Endothelial cell of umbilical vein (primary cell): ENCODE measurements at regions of chr3 and their contacts with region 1.

Region 1: DNA sequence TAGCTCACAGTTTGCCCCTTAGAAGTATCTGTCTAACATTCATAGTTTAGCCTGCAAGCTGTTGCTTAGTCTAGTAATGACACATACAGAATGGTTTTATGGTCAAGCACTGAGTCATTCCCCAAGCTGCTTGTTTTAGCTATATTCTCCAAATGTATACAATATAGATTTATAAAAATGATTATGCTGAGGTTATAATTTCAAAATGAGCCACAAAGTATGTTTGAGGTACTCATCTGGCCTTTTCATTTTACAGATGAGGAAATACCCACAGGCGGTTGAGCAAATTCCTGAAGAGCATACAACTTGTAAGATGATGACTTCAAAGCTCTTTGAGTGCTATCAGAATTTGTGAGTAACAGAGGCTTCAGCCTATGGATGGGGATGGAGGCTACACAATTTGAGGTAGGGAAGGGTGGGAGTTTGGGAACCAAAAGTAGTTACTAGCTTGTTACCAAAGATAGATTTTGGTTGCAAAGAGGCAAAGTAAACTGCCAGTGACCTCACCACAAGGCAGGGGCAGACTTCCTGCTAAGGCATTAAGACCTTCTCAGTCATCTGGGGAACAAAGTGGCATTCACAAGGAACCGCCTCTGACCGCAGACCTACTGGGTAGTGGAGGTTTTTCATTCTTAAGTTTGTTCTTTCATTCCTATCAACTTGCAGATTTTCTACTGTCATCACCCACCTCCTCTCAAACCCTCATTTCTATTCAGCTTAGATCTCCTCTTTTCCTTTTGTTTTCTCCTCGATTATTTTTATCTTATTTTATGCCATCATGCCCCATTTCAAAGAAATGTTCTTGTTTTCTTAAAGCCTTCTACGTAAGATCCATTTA is 257.2 kb upstream of the NECTIN3 start:
- DNase-seq: peak; percentile 36
- H3K4me3 ChIP-seq: no peak overlapping the region
- H3K27ac ChIP-seq: peak overlapping the region; percentile 61
- H3K4me1 ChIP-seq: peaks cover 21% of the 10 kb centered on the region
- H3K27me3 ChIP-seq: no peaks in the 10 kb centered on the region
- CTCF ChIP-seq: no peak
- POLR2A ChIP-seq: no peak

Region 2: DNA sequence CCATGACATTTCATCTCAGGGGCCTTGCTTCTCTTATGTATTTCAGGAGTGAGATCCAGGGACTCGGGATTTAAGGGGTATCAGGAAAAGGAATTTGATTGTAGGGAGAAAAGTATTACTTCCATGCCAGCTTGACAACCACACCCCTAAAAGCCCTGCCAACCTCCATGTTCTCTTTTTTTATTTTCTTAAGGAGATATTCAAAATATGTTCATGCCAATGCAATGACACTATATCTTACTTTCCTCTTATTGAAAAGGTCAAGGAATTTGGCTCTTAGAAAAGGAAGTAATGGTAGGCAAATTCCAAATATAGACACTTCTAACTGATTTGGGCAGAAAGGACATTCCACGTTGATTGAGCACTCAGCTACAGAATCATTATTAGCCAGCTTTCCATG is 150.2 kb before region 1 on chr3:
- CTCF ChIA-PET with region 1: no interaction called
- POLR2A ChIA-PET with region 1: no interaction called
- dilution Hi-C with region 1: no loop called
- intact Hi-C with region 1: no loop called
- DNase-seq: peak; percentile 21
- H3K4me3 ChIP-seq: no peak overlapping the region
- H3K27ac ChIP-seq: peak overlapping the region; percentile 43
- H3K4me1 ChIP-seq: peaks cover 10% of the 10 kb centered on the region
- H3K27me3 ChIP-seq: no peaks in the 10 kb centered on the region
- CTCF ChIP-seq: no peak
- POLR2A ChIP-seq: no peak

Region 3: GRCh38 chr3:110767838-110768237 is 46.6 kb before region 1 on chr3:
- CTCF ChIA-PET with region 1: no interaction called
- POLR2A ChIA-PET with region 1: no interaction called
- dilution Hi-C with region 1: no loop called
- intact Hi-C with region 1: no loop called
- DNase-seq: no peak
- H3K4me3 ChIP-seq: no peak overlapping the region
- H3K27ac ChIP-seq: no peak overlapping the region
- H3K4me1 ChIP-seq: no peaks in the 10 kb centered on the region
- H3K27me3 ChIP-seq: no peaks in the 10 kb centered on the region
- CTCF ChIP-seq: no peak
- POLR2A ChIP-seq: no peak

Region 4: DNA sequence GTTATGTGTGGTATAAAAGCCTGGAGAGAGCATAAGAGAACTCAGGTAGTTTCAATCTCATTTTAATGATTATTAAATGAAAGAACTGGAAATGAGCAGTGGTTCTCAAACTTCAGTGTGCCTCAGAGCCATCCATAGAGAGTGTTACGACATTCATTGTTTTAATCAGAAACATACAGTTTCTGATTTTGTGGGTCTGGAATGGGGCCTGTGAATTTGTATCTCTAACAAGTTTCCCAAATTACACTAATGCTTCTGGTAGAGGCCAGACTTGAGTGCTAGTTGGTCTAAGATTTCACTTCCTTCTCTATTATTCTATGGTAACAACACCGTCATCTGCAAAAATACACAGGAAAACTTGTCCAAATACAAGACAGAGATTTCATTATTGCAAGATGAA is 34.8 kb before region 1 on chr3:
- CTCF ChIA-PET with region 1: no interaction called
- POLR2A ChIA-PET with region 1: no interaction called
- dilution Hi-C with region 1: no loop called
- intact Hi-C with region 1: no loop called
- DNase-seq: no peak
- H3K4me3 ChIP-seq: no peak overlapping the region
- H3K27ac ChIP-seq: no peak overlapping the region
- H3K4me1 ChIP-seq: no peaks in the 10 kb centered on the region
- H3K27me3 ChIP-seq: no peaks in the 10 kb centered on the region
- CTCF ChIP-seq: no peak
- POLR2A ChIP-seq: no peak

Region 5: DNA sequence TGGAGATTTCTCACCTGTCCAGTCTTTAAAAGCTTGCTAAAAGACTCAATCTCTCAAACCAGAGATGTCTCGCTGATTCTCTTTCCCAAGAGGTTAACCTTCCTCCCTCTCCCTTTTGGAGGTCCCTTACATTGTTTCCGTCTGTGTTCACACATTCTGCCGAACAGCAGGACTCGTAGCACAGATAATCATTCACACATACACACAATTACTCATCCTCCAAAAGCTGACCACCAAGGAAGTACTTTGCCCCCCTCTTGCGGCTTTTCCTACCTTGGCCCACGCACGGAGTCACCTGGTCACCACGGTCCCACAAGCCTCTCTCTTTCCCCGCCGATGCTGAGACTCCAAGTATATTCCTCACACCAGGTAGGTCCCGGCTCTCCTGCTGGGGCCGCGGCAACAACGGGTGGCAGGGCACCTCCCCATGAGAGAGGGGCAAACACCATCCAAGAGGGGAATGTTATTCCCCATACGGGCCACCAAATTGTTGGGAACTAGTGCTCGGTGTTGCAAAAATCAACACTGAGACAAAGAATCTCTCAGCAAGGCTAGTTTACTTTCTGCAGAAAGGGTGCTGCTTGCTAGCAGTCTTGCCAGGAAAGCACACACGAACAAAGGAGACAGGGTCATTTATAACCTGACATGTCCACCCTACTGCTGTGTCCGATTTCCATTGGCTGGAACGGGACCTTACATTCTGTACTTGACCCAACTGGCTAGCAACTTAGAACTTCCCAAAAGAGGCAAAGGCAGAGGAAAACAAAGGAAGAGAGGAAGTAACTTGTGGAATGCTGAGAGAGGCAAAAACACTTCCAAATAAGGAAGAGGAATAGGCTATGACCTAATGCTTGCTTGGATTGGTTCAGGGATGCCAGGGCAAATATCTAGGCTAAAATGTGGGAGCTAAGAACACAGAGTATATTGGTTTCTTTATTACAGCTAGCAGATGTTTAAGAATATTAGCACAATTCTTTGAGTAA is 155.1 kb after region 1 on chr3:
- CTCF ChIA-PET with region 1: no interaction called
- POLR2A ChIA-PET with region 1: interaction called, 11 read pairs
- dilution Hi-C with region 1: no loop called
- intact Hi-C with region 1: no loop called
- DNase-seq: no peak
- H3K4me3 ChIP-seq: no peak overlapping the region
- H3K27ac ChIP-seq: no peak overlapping the region
- H3K4me1 ChIP-seq: no peaks in the 10 kb centered on the region
- H3K27me3 ChIP-seq: no peaks in the 10 kb centered on the region
- CTCF ChIP-seq: no peak
- POLR2A ChIP-seq: no peak